Activated naive CD8-positive, alpha-beta T cell treated with anti-CD3 and anti-CD28 coated beads, Interleukin-2, amount 10 ng/mL, durations not matched to agents 7 days and 5 days (primary cell): ENCODE measurements at regions of chr10 and their contacts with region 1.

Region 1: GRCh38 chr10:119517235-119518141 is 25.0 kb downstream of the RGS10 start:
- DNase-seq: peak; percentile 69
- ATAC-seq: peak; percentile 37
- H3K4me3 Mint-ChIP-seq: peak overlapping the region; percentile 83
- H3K27ac Mint-ChIP-seq: peak overlapping the region; percentile 84
- H3K4me1 Mint-ChIP-seq: peaks cover 56% of the 10 kb centered on the region
- H3K27me3 Mint-ChIP-seq: no peaks in the 10 kb centered on the region

Region 2: GRCh38 chr10:119502209-119502608 is 15.3 kb before region 1 on chr10:
- POLR2A ChIA-PET with region 1: interaction called, 34 read pairs
- DNase-seq: peak; percentile 83
- ATAC-seq: peak; percentile 90
- H3K4me3 Mint-ChIP-seq: peak overlapping the region; percentile 60
- H3K27ac Mint-ChIP-seq: peak overlapping the region; percentile 91
- H3K4me1 Mint-ChIP-seq: peaks cover 81% of the 10 kb centered on the region
- H3K27me3 Mint-ChIP-seq: no peaks in the 10 kb centered on the region

Region 3: DNA sequence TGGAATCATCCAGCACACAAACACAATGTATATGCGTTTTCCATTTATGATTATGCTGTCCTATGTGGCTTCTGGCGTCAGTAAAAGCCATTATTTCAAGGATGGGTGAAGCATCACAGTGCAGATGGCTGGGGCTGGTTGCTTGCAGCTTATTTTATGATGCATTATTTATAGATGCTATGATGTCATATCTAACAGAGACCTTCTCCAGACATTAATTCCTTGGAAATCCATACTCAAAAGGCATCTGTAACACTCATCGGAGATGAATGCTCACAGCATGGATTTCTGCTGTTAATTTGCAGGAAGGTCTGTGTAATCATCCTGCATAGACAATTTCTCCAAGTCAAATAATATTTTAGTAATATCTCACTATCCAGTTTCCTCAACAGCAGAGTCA is 17.8 kb after region 1 on chr10:
- POLR2A ChIA-PET with region 1: interaction called, 95 read pairs
- DNase-seq: no peak
- ATAC-seq: no peak
- H3K4me3 Mint-ChIP-seq: peak overlapping the region; percentile 89
- H3K27ac Mint-ChIP-seq: peak overlapping the region; percentile 98
- H3K4me1 Mint-ChIP-seq: peaks cover 64% of the 10 kb centered on the region
- H3K27me3 Mint-ChIP-seq: no peaks in the 10 kb centered on the region

Region 4: GRCh38 chr10:119542988-119543813 is 25.7 kb after region 1 on chr10:
- POLR2A ChIA-PET with region 1: interaction called, 95 read pairs
- DNase-seq: peak; percentile 81
- ATAC-seq: peak; percentile 25
- H3K4me3 Mint-ChIP-seq: peak overlapping the region; percentile 87
- H3K27ac Mint-ChIP-seq: peak overlapping the region; percentile 91
- H3K4me1 Mint-ChIP-seq: peaks cover 29% of the 10 kb centered on the region
- H3K27me3 Mint-ChIP-seq: peaks cover 14% of the 10 kb centered on the region